Panc1 (cell line): ENCODE measurements at regions of chr3 and their contacts with region 1.

Region 1: GRCh38 chr3:15356186-15356585 is 23.8 kb upstream of the SH3BP5 start:
- DNase-seq: no peak
- ATAC-seq: no peak
- H3K4me3 ChIP-seq: no peak overlapping the region
- H3K27ac ChIP-seq: no peak overlapping the region
- H3K4me1 ChIP-seq: no peaks in the 10 kb centered on the region
- H3K27me3 ChIP-seq: no peaks in the 10 kb centered on the region
- CTCF ChIP-seq: no peak

Region 2: DNA sequence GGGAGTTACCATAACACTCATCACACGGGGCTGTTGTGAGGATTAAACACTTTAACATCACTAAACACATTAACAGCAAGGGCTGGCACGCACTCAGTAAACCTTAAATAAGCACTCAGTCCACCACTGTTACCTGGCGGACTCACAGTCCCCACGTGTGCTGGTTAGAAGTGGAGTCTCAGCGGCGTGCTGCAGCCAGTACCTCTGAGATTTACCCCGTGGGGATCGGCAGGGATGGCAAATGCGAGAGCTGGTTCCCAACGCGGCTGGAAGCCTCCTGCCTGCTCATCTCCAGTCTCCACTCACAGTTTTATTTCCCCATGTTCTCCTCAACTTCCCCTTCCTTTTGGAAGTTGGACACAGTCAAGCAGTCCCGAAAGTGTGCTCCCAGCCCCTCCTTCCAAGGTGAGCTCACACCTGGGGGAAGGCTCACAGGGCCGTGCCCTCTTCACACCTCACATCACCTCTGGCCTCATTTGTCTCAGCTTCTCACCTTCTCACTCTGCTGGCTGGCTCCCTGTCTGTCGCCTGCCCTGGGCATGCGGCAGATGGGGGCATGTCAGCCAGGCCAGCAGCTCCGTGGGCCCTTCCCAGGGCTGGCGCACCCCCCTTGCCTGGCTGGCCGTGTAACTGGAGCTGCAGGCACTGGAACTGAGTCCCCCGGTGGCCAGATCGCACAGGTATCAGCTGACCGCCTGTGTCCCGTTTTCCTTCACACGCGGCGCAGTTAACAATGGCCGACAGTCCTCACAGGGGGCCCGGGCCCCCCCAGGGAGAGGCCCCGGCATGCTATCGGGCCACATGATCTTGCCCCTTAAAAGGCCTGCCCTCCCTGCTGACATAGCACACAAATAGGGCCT is 1563.4 kb before region 1 on chr3:
- CTCF ChIA-PET with region 1: no interaction called
- POLR2A ChIA-PET with region 1: interaction called, 21 read pairs
- in situ Hi-C with region 1: no loop called
- intact Hi-C with region 1: no loop called
- DNase-seq: no peak
- ATAC-seq: no peak
- H3K4me3 ChIP-seq: no peak overlapping the region
- H3K27ac ChIP-seq: no peak overlapping the region
- H3K4me1 ChIP-seq: no peaks in the 10 kb centered on the region
- H3K27me3 ChIP-seq: no peaks in the 10 kb centered on the region; the same call in 1 of the 2 replicates
- CTCF ChIP-seq: no peak